CD4-positive, alpha-beta T cell (primary cell): ENCODE measurements at regions of chr9 and their contacts with region 1.

Region 1: GRCh38 chr9:109086242-109086641 is 33.5 kb downstream of the TMEM245 start:
- DNase-seq: peak in 2 of 14 experiments; percentile 25 to 30
- ATAC-seq: no peak
- H3K4me3 ChIP-seq: no peak overlapping the region
- H3K4me3 Mint-ChIP-seq: no peak overlapping the region
- H3K27ac ChIP-seq: no peak overlapping the region
- H3K27ac Mint-ChIP-seq: no peak overlapping the region
- H3K4me1 ChIP-seq: no peaks in the 10 kb centered on the region
- H3K4me1 Mint-ChIP-seq: peaks cover 22% of the 10 kb centered on the region
- H3K27me3 ChIP-seq: no peaks in the 10 kb centered on the region
- H3K27me3 Mint-ChIP-seq: no peaks in the 10 kb centered on the region
- CTCF ChIP-seq: no peak

Region 2: GRCh38 chr9:109048822-109049221 is 37.4 kb before region 1 on chr9:
- CTCF ChIA-PET with region 1: no interaction called
- POLR2A ChIA-PET with region 1: no interaction called
- intact Hi-C with region 1: loop called in 1 of 2 experiments (anchors 5 kb)
- DNase-seq: no peak
- ATAC-seq: no peak
- H3K4me3 ChIP-seq: no peak overlapping the region
- H3K4me3 Mint-ChIP-seq: no peak overlapping the region
- H3K27ac ChIP-seq: no peak overlapping the region
- H3K27ac Mint-ChIP-seq: no peak overlapping the region
- H3K4me1 ChIP-seq: no peaks in the 10 kb centered on the region
- H3K4me1 Mint-ChIP-seq: no peaks in the 10 kb centered on the region
- H3K27me3 ChIP-seq: no peaks in the 10 kb centered on the region
- H3K27me3 Mint-ChIP-seq: no peaks in the 10 kb centered on the region
- CTCF ChIP-seq: no peak

Region 3: GRCh38 chr9:109143881-109144562 is 57.8 kb after region 1 on chr9:
- CTCF ChIA-PET with region 1: no interaction called
- POLR2A ChIA-PET with region 1: no interaction called
- intact Hi-C with region 1: no loop called
- DNase-seq: peak in 2 of 14 experiments; percentile 9 to 16
- ATAC-seq: no peak
- H3K4me3 ChIP-seq: no peak overlapping the region
- H3K4me3 Mint-ChIP-seq: no peak overlapping the region
- H3K27ac ChIP-seq: no peak overlapping the region
- H3K27ac Mint-ChIP-seq: no peak overlapping the region
- H3K4me1 ChIP-seq: peaks cover 5% of the 10 kb centered on the region
- H3K4me1 Mint-ChIP-seq: peaks cover 5% of the 10 kb centered on the region
- H3K27me3 ChIP-seq: no peaks in the 10 kb centered on the region
- H3K27me3 Mint-ChIP-seq: peaks cover 6% of the 10 kb centered on the region
- CTCF ChIP-seq: no peak